ENCODE measurements at regions of chrX and their contacts with region 1.

Region 1: DNA sequence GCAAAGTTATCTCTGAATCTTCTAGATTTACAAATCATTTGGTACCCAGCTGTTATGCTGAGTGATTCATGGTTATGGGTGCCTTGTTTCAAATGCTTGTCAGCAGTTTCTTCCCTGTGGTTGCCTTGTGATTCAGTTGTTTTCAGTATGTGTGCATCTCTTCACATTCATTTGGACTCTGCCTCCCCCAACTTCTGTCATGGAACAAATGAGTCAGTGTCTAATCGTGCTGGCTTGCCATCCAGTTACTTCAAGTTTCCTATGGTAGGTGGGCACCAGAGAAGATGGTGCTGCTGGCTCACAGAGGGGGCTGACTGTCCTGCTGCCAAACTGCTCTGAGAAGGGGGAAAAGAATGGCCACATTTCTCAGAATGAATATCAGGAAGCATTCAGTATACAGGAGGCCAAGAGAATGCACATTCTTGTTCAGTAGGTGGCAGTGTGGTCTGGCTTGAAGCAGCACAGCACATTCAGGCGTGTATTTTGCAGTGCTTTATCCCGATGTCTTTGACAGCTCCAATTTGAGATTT is 260.9 kb downstream of the GLUD2 start:
- DNase-seq: peak; percentile 68
- ATAC-seq: peak; percentile 86
- H3K4me3 ChIP-seq: no peak overlapping the region
- H3K27ac ChIP-seq: no peak overlapping the region
- H3K4me1 ChIP-seq: peaks cover 15% of the 10 kb centered on the region
- H3K27me3 ChIP-seq: no peaks in the 10 kb centered on the region
- CTCF ChIP-seq: peak; percentile 44 to 63 (median 49); a peak in 4 of 6 replicates
- EP300 ChIP-seq: peak in 1 of 2 experiments; percentile 75; a peak in 1 of 4 replicates
- POLR2A ChIP-seq: no peak
- RAD21 ChIP-seq: peak; percentile 59

Region 2: GRCh38 chrX:120801426-120801825 is 506.9 kb before region 1 on chrX:
- CTCF ChIA-PET with region 1: no interaction called
- POLR2A ChIA-PET with region 1: no interaction called
- RAD21 ChIA-PET with region 1: no interaction called
- SMC1A ChIA-PET with region 1: no interaction called
- in situ Hi-C with region 1: loop called (anchors 10 kb)
- intact Hi-C with region 1: no loop called
- DNase-seq: no peak
- ATAC-seq: no peak
- H3K4me3 ChIP-seq: no peak overlapping the region
- H3K27ac ChIP-seq: no peak overlapping the region
- H3K4me1 ChIP-seq: no peaks in the 10 kb centered on the region
- H3K27me3 ChIP-seq: no peaks in the 10 kb centered on the region
- CTCF ChIP-seq: no peak
- EP300 ChIP-seq: no peak
- POLR2A ChIP-seq: no peak
- RAD21 ChIP-seq: no peak

Region 3: GRCh38 chrX:121114691-121115090 is 193.7 kb before region 1 on chrX:
- CTCF ChIA-PET with region 1: no interaction called
- POLR2A ChIA-PET with region 1: no interaction called
- RAD21 ChIA-PET with region 1: no interaction called
- SMC1A ChIA-PET with region 1: no interaction called
- in situ Hi-C with region 1: no loop called
- intact Hi-C with region 1: loop called (anchors 10 kb)
- DNase-seq: no peak
- ATAC-seq: no peak
- H3K4me3 ChIP-seq: no peak overlapping the region
- H3K27ac ChIP-seq: no peak overlapping the region
- H3K4me1 ChIP-seq: no peaks in the 10 kb centered on the region
- H3K27me3 ChIP-seq: no peaks in the 10 kb centered on the region
- CTCF ChIP-seq: no peak
- EP300 ChIP-seq: no peak
- POLR2A ChIP-seq: no peak
- RAD21 ChIP-seq: no peak

Region 4: DNA sequence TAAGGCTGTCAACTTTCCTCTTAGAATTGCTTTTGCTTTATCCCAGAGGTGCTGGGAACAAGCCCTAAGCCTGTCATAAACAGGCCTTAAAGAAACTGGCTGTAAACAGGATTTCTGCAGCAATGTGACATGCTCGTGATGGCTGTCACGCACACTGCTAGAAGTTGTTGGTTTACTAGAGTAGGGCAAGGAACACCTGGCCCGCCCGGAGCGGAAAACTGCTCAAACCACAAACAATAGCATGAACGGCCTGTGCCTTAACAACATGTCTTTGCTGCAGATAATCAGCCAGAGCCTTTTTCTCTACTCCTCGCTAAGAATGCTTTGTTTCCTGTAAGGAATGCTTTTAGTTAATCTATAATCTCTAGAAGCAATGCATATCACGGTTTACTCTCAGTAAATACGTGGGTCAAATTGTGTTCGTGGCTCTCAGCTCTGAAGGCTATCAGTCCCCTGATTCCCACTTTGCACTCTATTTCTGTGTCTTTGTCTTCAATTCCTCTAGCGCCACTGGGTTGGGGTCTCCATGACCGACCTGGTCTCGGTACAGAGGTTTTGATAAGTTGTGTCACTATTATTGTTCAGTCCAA is 57.3 kb after region 1 on chrX:
- CTCF ChIA-PET with region 1: no interaction called
- POLR2A ChIA-PET with region 1: no interaction called
- RAD21 ChIA-PET with region 1: no interaction called
- SMC1A ChIA-PET with region 1: no interaction called
- in situ Hi-C with region 1: no loop called
- intact Hi-C with region 1: no loop called
- DNase-seq: no peak
- ATAC-seq: no peak
- H3K4me3 ChIP-seq: no peak overlapping the region
- H3K27ac ChIP-seq: no peak overlapping the region
- H3K4me1 ChIP-seq: no peaks in the 10 kb centered on the region
- H3K27me3 ChIP-seq: no peaks in the 10 kb centered on the region
- CTCF ChIP-seq: no peak
- EP300 ChIP-seq: no peak
- POLR2A ChIP-seq: no peak
- RAD21 ChIP-seq: no peak

Region 5: DNA sequence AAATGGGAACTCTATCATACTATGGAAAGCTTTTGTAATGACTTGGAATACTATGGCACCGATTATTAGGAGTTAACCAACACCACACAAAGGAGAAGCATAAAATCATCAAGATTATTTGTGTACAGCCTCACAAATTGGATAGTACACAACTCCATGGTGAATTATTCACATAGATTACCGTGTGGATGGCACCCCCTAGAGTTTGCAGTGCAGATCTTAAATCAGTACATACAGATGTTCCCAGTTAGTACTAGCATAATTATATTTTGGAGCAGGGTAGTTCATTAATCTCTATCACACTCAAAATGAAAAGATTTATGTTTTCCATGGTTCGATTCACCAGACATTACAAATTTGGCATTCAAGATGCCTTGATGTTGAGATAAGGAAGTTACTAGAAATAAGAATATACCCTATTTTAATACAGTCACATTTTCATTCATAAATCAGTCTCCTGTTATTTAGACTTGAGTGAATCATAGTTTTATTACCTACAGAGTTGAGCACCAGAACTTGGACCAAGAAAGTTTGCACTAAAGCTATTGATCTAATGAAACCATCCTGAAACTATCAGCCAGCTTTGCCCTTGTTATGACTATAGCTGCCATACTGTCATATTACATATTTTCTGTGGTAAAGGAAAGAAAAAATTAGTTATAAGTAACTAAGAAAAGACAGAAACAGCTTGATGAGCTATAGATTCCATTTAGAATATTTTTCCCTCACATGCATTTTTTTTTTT is 270.8 kb after region 1 on chrX:
- CTCF ChIA-PET with region 1: interaction called, 15 read pairs
- POLR2A ChIA-PET with region 1: no interaction called
- RAD21 ChIA-PET with region 1: no interaction called
- SMC1A ChIA-PET with region 1: interaction called, 7 read pairs
- in situ Hi-C with region 1: no loop called
- intact Hi-C with region 1: loop called (anchors 2 kb)
- DNase-seq: peak; percentile 4
- ATAC-seq: peak; percentile 92
- H3K4me3 ChIP-seq: no peak overlapping the region
- H3K27ac ChIP-seq: no peak overlapping the region
- H3K4me1 ChIP-seq: no peaks in the 10 kb centered on the region
- H3K27me3 ChIP-seq: no peaks in the 10 kb centered on the region
- CTCF ChIP-seq: peak; percentile 44 to 54 (median 51); a peak in 5 of 6 replicates
- EP300 ChIP-seq: no peak
- POLR2A ChIP-seq: no peak
- RAD21 ChIP-seq: peak; percentile 74

Measured in GM12878 (cell line).